Ascending aorta (tissue), 2 donors: ENCODE measurements at regions of chr14 and their contacts with region 1.

Region 1: DNA sequence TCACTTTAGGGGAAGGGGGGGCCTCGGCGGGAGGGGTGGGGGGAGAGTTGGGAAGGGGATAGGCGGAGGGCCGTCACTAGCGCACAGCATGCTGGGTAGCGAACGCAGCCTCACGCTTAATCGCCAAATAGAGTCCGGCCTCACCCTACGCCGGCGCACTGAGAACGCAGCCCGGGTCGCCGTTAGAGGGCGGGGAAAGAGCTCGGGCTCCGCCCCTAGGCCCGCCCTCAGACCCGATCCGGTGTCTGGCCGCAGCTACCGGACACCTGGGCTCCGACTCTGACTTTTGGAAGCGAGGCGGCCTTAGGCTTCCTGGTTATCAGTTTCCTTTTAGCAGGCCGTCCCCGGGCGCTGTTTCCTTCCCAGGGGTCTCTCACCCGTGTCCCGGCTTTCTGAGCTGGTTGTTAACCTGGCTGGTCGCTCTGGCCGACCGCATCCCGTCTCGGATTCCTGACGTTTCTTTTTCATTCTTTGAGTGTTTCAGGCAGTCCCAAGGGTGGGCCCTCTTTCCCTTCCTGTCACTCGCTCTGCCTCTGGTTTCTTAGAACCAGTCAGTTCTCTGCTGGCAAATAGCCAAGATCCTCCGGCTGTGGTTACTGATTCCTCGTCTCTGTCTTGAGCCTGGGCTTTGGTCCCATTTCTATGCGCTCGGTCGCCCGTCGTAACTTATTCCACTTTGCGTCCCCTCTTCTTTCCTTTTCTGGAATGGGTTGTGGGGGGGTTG is 378 bp upstream of the STRN3 start:
- DNase-seq: peak; percentile 89 to 98
- H3K4me3 ChIP-seq: peak overlapping the region; percentile 98 to 100
- H3K27ac ChIP-seq: peak overlapping the region; percentile 100
- H3K4me1 ChIP-seq: peaks cover 0 to 14% of the 10 kb centered on the region in 2 donors
- H3K27me3 ChIP-seq: no peaks in the 10 kb centered on the region
- CTCF ChIP-seq: no peak

Region 2: GRCh38 chr14:30994681-30995620 is 31.6 kb before region 1 on chr14:
- intact Hi-C with region 1: loop called (anchors 2 kb)
- DNase-seq: no peak
- H3K4me3 ChIP-seq: no peak overlapping the region
- H3K27ac ChIP-seq: peak overlapping the region; percentile 7 to 30
- H3K4me1 ChIP-seq: peaks cover 0 to 16% of the 10 kb centered on the region in 2 donors
- H3K27me3 ChIP-seq: no peaks in the 10 kb centered on the region
- CTCF ChIP-seq: no peak

Region 3: DNA sequence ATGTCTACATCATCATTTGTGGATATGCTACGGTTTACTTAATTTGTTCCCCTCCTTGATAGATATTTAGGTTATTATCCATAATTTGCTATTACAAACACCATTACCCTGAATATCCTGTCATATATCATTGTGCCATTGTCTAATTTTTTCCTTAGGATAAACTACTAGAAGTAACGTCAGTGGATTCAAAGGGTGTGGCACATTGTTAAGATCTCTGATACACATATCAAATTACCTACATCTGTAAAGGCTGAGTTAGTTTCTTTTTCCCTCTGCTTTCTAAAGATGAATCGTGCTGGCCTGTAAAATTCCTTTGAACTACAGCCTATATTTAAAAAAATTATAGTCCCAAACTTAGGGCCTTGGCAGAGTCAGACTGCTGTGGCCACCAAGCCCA is 53.5 kb after region 1 on chr14:
- intact Hi-C with region 1: loop called (anchors 2 kb)
- DNase-seq: no peak
- H3K4me3 ChIP-seq: no peak overlapping the region
- H3K27ac ChIP-seq: no peak overlapping the region
- H3K4me1 ChIP-seq: peaks cover 0 to 16% of the 10 kb centered on the region in 2 donors
- H3K27me3 ChIP-seq: no peaks in the 10 kb centered on the region
- CTCF ChIP-seq: no peak

Region 4: GRCh38 chr14:31166271-31166710 is 139.7 kb after region 1 on chr14:
- intact Hi-C with region 1: loop called (anchors 5 kb)
- DNase-seq: no peak
- H3K4me3 ChIP-seq: no peak overlapping the region
- H3K27ac ChIP-seq: peak overlapping the region; percentile 80 to 92
- H3K4me1 ChIP-seq: peaks cover 7 to 21% of the 10 kb centered on the region in 2 donors
- H3K27me3 ChIP-seq: no peaks in the 10 kb centered on the region
- CTCF ChIP-seq: no peak

Region 5: DNA sequence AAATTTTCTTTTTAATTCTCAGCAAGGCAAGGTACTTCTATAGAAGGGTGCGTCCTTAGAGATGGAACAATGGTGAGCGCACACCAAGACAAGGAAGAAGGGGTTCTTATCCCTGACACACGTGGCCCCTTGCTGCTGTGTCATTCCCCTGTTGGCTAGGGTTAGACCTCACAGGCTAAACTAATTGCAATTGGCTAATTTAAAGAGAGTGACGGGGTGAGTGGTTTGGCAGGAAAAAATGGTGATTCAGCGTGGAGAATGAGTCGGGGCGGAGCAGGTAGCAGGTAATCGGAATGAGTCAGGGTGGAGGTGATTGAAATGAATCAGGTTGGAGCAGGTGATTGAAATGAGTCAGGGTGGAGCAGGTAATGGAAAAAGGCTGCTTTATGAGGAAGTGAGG is 217.3 kb after region 1 on chr14:
- intact Hi-C with region 1: no loop called
- DNase-seq: no peak
- H3K4me3 ChIP-seq: no peak overlapping the region
- H3K27ac ChIP-seq: no peak overlapping the region
- H3K4me1 ChIP-seq: peaks cover 0 to 4% of the 10 kb centered on the region in 2 donors
- H3K27me3 ChIP-seq: no peaks in the 10 kb centered on the region
- CTCF ChIP-seq: no peak

Region 6: GRCh38 chr14:31456841-31457664 is 430.5 kb after region 1 on chr14 and contains the start of gene DTD2:
- intact Hi-C with region 1: loop called (anchors 5 kb)
- DNase-seq: peak; percentile 75 to 97
- H3K4me3 ChIP-seq: peak within 1 kb of the TSS; percentile 72 to 74
- H3K27ac ChIP-seq: peak within 1 kb of the TSS; percentile 87 to 90
- H3K4me1 ChIP-seq: peaks cover 4 to 6% of the 10 kb centered on the region in 2 donors
- H3K27me3 ChIP-seq: no peaks in the 10 kb centered on the region
- CTCF ChIP-seq: no peak
- total RNA-seq, gene DTD2: 120 TPM

Region 7: DNA sequence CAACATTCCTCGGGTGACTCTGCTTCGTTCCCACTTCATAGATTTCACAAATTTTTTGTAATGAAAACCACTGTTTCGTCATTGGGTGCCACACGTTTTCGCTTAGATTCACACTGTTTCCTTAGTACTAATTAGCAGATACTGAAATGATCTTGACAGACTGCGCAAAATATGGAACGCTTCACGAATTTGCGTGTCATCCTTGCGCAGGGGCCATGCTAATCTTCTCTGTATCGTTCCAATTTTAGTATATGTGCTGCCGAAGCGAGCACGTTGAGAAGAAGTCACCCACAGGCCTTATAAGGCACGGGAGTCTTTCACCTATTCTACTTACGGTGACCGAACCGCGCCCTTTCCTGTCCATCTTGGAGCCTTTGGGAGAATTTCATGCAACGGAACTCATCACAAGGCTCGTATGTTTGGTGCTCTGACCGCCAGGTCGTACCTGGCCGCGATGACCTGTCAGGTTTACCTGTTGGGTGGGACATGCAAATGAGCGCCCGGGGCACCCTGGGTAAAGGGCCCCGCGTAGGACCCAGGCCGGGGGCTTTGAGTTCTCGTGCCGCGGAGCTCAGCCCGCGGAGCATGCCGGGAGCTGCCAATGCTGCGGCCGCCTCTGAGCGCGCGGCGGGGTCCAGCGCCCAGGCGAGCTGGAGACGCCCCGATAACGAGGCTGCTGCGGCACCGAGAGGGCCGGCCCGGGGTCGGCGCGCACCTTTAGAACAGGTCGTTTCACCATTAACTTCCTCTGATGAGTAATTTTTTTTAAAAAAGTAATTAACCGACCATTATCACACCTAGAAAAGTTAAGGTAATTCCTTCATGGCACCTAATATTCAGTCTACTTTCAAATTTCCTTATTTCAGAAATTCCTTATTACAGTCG is 1176.7 kb after region 1 on chr14 and contains the start of gene RNU6-8:
- intact Hi-C with region 1: loop called (anchors 5 kb)
- DNase-seq: peak; percentile 40 to 91
- H3K4me3 ChIP-seq: peak within 1 kb of the TSS; percentile 72 to 75
- H3K27ac ChIP-seq: peak within 1 kb of the TSS; percentile 69 to 75
- H3K4me1 ChIP-seq: no peaks in the 10 kb centered on the region
- H3K27me3 ChIP-seq: no peaks in the 10 kb centered on the region
- CTCF ChIP-seq: no peak
- total RNA-seq, gene RNU6-8: not detected